ENCODE measurements at regions of chr12 and their contacts with region 1.

Region 1: DNA sequence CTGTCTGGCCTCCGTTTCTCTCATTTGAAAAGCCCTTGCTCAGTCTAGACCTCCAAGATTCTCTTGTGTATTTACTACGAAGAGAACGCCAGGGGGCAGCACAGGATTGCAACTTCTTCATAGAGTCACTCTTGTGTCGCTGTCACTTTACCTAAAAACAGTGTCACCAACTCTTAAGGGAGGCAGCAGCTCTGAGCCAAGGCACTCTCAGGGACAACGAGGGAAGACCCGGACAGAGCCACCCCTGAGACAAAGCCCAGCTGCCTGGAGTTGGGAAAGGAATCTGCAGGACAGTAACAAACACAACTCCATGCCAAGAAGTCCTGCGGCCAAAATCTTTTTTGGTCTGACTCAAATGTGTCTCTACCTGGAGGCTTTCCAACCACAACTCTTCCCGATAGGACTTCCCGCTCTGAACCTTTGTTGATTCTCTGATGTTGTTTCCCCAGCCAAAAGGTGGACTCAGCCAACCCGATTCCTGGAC is 9.6 kb upstream of the RPAP3 start:
- DNase-seq: peak; percentile 84
- H3K4me3 ChIP-seq: peak overlapping the region in 1 of 2 donors; percentile 7
- H3K27ac ChIP-seq: peak overlapping the region; percentile 75
- H3K4me1 ChIP-seq: peaks cover 4% of the 10 kb centered on the region
- H3K27me3 ChIP-seq: no peaks in the 10 kb centered on the region
- CTCF ChIP-seq: peak; percentile 70 to 91 (median 88)
- POLR2A ChIP-seq: no peak

Region 2: GRCh38 chr12:47736877-47737676 is 21.6 kb after region 1 on chr12:
- intact Hi-C with region 1: loop called (anchors 2 kb)
- DNase-seq: peak; percentile 37
- H3K4me3 ChIP-seq: no peak overlapping the region
- H3K27ac ChIP-seq: peak overlapping the region; percentile 41 to 66
- H3K4me1 ChIP-seq: no peaks in the 10 kb centered on the region
- H3K27me3 ChIP-seq: no peaks in the 10 kb centered on the region
- CTCF ChIP-seq: no peak
- POLR2A ChIP-seq: no peak

Region 3: GRCh38 chr12:47758834-47759690 is 43.6 kb after region 1 on chr12 and contains the start of gene RAPGEF3:
- intact Hi-C with region 1: loop called (anchors 5 kb)
- DNase-seq: peak; percentile 88
- H3K4me3 ChIP-seq: peak within 1 kb of the TSS; percentile 51 to 60
- H3K27ac ChIP-seq: peak within 1 kb of the TSS; percentile 76 to 78
- H3K4me1 ChIP-seq: peaks cover 16% of the 10 kb centered on the region
- H3K27me3 ChIP-seq: no peaks in the 10 kb centered on the region
- CTCF ChIP-seq: peak; percentile 31 to 57 (median 42)
- POLR2A ChIP-seq: peak; percentile 21
- total RNA-seq, gene RAPGEF3: 19.1 to 28.5 TPM

Region 4: DNA sequence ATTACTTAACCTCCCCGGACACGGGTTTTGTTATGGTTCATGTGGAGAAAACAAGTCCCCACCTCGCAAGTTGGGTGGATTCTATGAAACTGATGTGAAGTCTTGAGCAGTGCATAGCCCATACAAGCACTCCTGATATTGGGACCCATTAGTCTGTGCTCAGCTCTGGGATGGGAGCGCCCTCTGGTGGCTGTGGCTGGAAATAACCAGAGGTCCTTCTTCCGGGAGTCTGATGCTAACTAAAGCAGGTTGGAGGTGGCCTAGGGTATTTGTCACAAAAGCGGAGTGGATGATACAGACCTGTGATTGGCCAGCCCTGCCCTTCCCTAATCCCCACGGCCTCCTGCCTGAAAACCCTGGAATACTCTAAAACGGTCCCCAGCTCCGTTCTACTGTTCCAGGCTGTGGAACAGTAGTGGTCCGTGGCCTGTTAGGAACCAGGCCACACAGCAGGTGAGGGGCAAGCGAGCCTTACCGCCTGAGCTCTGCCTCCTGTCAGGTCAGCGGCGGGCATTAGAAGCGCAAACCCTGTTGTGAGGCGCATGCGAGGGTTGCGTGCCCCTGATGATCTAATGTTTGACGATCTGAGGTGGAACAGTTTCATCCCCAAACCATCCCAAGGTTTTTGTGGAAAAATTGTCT is 64.0 kb after region 1 on chr12:
- intact Hi-C with region 1: loop called (anchors 2 kb)
- DNase-seq: peak; percentile 84
- H3K4me3 ChIP-seq: no peak overlapping the region
- H3K27ac ChIP-seq: no peak overlapping the region
- H3K4me1 ChIP-seq: peaks cover 12% of the 10 kb centered on the region
- H3K27me3 ChIP-seq: no peaks in the 10 kb centered on the region
- CTCF ChIP-seq: peak; percentile 79 to 96 (median 95)
- POLR2A ChIP-seq: no peak

Region 5: GRCh38 chr12:47837190-47838171 is 122.0 kb after region 1 on chr12:
- intact Hi-C with region 1: loop called (anchors 2 kb)
- DNase-seq: peak; percentile 66
- H3K4me3 ChIP-seq: no peak overlapping the region
- H3K27ac ChIP-seq: no peak overlapping the region
- H3K4me1 ChIP-seq: no peaks in the 10 kb centered on the region
- H3K27me3 ChIP-seq: no peaks in the 10 kb centered on the region
- CTCF ChIP-seq: peak; percentile 92 to 98 (median 94)
- POLR2A ChIP-seq: no peak

Region 6: GRCh38 chr12:47963340-47964040 is 248.1 kb after region 1 on chr12 and contains the start of gene TMEM106C:
- intact Hi-C with region 1: loop called (anchors 10 kb)
- DNase-seq: peak; percentile 87
- H3K4me3 ChIP-seq: peak within 1 kb of the TSS; percentile 50 to 58
- H3K27ac ChIP-seq: peak within 1 kb of the TSS in 1 of 2 donors; percentile 8
- H3K4me1 ChIP-seq: no peaks in the 10 kb centered on the region
- H3K27me3 ChIP-seq: no peaks in the 10 kb centered on the region
- CTCF ChIP-seq: peak; percentile 90 to 98 (median 96)
- POLR2A ChIP-seq: peak; percentile 56
- total RNA-seq, gene TMEM106C: 54.6 to 91.1 TPM